CD14-positive monocyte (primary cell): ENCODE measurements at regions of chr2 and their contacts with region 1.

Region 1: DNA sequence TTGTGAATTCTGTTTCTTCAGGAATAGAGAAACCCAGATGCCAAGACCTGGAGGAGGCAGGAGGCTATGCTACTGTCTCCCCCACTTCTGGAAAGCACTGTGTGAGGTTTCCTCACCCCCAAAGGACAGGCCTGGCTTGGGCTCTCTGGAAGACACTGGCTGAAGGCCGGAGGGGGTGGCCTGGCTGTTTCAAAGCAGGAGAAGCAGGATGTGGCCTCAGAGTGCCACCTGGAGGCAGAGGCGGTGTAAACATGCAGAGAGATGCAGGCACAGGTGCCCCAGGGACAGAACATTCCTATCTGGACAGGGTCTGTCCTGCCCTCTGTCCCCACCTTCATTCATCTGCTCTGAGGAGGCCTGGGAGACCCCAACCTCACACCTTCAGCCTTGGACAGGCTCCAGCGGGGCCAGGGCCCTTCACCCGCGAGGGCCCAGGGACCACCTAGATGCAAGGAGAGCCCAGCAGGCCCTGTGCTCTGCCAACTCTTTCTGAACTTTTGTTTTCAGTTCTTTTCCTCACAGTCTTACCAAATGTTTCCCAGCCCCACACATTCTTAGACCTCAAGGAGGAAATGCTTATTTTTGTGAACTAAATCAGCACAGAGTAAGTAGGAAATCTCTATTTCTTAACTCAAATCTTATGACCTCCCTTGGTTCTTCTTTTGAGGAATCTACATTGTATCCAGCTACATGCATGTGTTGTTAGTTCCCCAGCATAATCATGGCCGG is 79.2 kb downstream of the LONRF2 start:
- DNase-seq: peak; percentile 38 to 51 (median 45)
- H3K4me3 ChIP-seq: peak overlapping the region in 1 of 3 experiments; percentile 46
- H3K4me3 Mint-ChIP-seq: peak overlapping the region; percentile 20 to 75
- H3K27ac ChIP-seq: peak overlapping the region; percentile 79 to 83
- H3K27ac Mint-ChIP-seq: peak overlapping the region; percentile 68 to 92 (median 88)
- H3K4me1 ChIP-seq: peaks cover 36 to 43% of the 10 kb centered on the region in 2 donors
- H3K4me1 Mint-ChIP-seq: peaks cover 41% of the 10 kb centered on the region
- H3K27me3 ChIP-seq: no peaks in the 10 kb centered on the region
- H3K27me3 Mint-ChIP-seq: peaks cover 0 to 4% (median 0%) of the 10 kb centered on the region in 3 donors
- CTCF ChIP-seq: peak; percentile 87

Region 2: GRCh38 chr2:99725820-99726219 is 517.2 kb before region 1 on chr2:
- intact Hi-C with region 1: loop called (anchors 5 kb)
- DNase-seq: peak; percentile 4 to 20 (median 5)
- H3K4me3 ChIP-seq: no peak overlapping the region
- H3K4me3 Mint-ChIP-seq: no peak overlapping the region
- H3K27ac ChIP-seq: peak overlapping the region in 1 of 2 donors; percentile 37
- H3K27ac Mint-ChIP-seq: peak overlapping the region in 2 of 7 donors; percentile 37 to 76
- H3K4me1 ChIP-seq: peaks cover 13 to 18% of the 10 kb centered on the region in 2 donors
- H3K4me1 Mint-ChIP-seq: peaks cover 29% of the 10 kb centered on the region
- H3K27me3 ChIP-seq: no peaks in the 10 kb centered on the region
- H3K27me3 Mint-ChIP-seq: peaks cover 0 to 3% (median 0%) of the 10 kb centered on the region in 3 donors
- CTCF ChIP-seq: peak; percentile 75

Region 3: GRCh38 chr2:100178051-100178788 is 64.8 kb before region 1 on chr2:
- intact Hi-C with region 1: loop called (anchors 5 kb)
- DNase-seq: peak; percentile 58 to 73 (median 68)
- H3K4me3 ChIP-seq: no peak overlapping the region
- H3K4me3 Mint-ChIP-seq: peak overlapping the region in 1 of 2 donors; percentile 6
- H3K27ac ChIP-seq: no peak overlapping the region
- H3K27ac Mint-ChIP-seq: peak overlapping the region in 3 of 7 donors; percentile 28 to 77 (median 54)
- H3K4me1 ChIP-seq: peaks cover 14 to 15% of the 10 kb centered on the region in 2 donors
- H3K4me1 Mint-ChIP-seq: peaks cover 26% of the 10 kb centered on the region
- H3K27me3 ChIP-seq: no peaks in the 10 kb centered on the region
- H3K27me3 Mint-ChIP-seq: peaks cover 0 to 1% (median 0%) of the 10 kb centered on the region in 3 donors
- CTCF ChIP-seq: peak; percentile 56

Region 4: GRCh38 chr2:100184055-100184737 is 58.9 kb before region 1 on chr2:
- intact Hi-C with region 1: loop called (anchors 5 kb)
- DNase-seq: peak; percentile 76 to 90 (median 77)
- H3K4me3 ChIP-seq: peak overlapping the region in 1 of 3 experiments; percentile 12
- H3K4me3 Mint-ChIP-seq: no peak overlapping the region
- H3K27ac ChIP-seq: peak overlapping the region; percentile 48 to 71
- H3K27ac Mint-ChIP-seq: peak overlapping the region; percentile 75 to 91 (median 87)
- H3K4me1 ChIP-seq: peaks cover 38 to 41% of the 10 kb centered on the region in 2 donors
- H3K4me1 Mint-ChIP-seq: peaks cover 47% of the 10 kb centered on the region
- H3K27me3 ChIP-seq: no peaks in the 10 kb centered on the region
- H3K27me3 Mint-ChIP-seq: no peaks in the 10 kb centered on the region
- CTCF ChIP-seq: no peak

Region 5: DNA sequence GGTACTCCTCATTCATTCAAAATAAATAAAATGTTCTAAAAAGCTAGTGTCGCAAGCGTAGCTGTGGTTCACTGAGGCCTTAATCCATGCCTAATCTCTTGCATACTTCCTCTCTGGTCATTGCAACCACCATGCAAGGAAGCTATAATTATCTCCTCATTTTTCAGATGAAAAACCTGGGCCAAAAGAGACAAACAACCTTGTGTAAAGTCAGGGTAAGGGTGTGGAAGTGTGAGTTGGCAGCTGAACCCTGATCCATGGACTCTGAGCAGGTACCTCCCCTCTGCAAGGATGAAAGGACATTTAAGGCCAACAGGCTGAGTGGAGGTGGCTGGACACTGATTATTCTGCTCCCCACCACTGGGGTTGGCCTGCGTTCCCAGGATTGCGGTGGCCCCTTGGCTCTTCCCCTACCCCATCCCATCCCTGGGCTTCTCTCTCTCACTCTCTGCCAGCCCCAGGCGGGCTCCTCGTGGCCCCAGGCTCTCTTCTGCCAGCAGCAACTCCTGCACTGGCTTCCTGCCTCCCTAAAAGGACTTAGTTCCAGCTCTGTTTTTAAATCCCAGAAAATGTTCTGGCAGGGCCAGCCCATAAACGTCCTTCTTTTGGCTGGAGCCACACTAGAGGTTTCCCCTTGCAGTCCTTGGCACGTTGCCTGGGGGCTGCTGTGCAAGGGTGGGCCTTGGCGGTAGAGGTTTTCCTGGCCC is 28.6 kb before region 1 on chr2:
- intact Hi-C with region 1: no loop called
- DNase-seq: peak; percentile 26 to 52 (median 41)
- H3K4me3 ChIP-seq: peak overlapping the region in 1 of 3 experiments; percentile 37
- H3K4me3 Mint-ChIP-seq: peak overlapping the region in 1 of 2 donors; percentile 35
- H3K27ac ChIP-seq: peak overlapping the region; percentile 34 to 61
- H3K27ac Mint-ChIP-seq: peak overlapping the region in 6 of 7 donors; percentile 24 to 86 (median 46)
- H3K4me1 ChIP-seq: peaks cover 47 to 55% of the 10 kb centered on the region in 2 donors
- H3K4me1 Mint-ChIP-seq: peaks cover 56% of the 10 kb centered on the region
- H3K27me3 ChIP-seq: no peaks in the 10 kb centered on the region
- H3K27me3 Mint-ChIP-seq: peaks cover 0 to 2% (median 0%) of the 10 kb centered on the region in 3 donors
- CTCF ChIP-seq: no peak